ENCODE measurements at regions of chr6 and their contacts with region 1.

Region 1: GRCh38 chr6:30227763-30228487 is 14.7 kb upstream of the TRIM26 start:
- DNase-seq: no peak
- ATAC-seq: no peak
- H3K4me3 ChIP-seq: no peak overlapping the region
- H3K27ac ChIP-seq: no peak overlapping the region
- H3K4me1 ChIP-seq: no peaks in the 10 kb centered on the region
- H3K27me3 ChIP-seq: no peaks in the 10 kb centered on the region
- CTCF ChIP-seq: no peak

Region 2: DNA sequence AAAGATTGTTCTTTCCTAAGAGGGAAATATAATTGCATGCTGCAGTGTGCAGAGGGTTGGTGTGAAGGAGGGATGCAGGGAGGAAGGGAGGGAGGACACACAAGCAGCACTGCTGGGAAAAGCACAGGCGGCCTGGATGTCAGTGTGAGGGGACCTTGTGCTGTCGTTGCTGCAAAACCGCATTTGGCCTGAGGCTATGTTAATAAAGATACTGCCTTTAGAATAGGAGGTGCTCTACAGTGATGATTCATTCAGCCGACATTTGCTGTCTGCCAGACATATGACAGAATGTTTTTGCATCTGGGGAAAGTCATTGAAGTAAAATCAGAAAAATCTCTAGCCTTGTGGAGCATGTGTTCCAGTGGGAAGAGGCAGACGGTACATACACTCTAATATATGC is 35.8 kb after region 1 on chr6:
- intact Hi-C with region 1: no loop called
- DNase-seq: no peak
- ATAC-seq: no peak
- H3K4me3 ChIP-seq: no peak overlapping the region
- H3K27ac ChIP-seq: no peak overlapping the region
- H3K4me1 ChIP-seq: no peaks in the 10 kb centered on the region
- H3K27me3 ChIP-seq: no peaks in the 10 kb centered on the region
- CTCF ChIP-seq: no peak

Region 3: DNA sequence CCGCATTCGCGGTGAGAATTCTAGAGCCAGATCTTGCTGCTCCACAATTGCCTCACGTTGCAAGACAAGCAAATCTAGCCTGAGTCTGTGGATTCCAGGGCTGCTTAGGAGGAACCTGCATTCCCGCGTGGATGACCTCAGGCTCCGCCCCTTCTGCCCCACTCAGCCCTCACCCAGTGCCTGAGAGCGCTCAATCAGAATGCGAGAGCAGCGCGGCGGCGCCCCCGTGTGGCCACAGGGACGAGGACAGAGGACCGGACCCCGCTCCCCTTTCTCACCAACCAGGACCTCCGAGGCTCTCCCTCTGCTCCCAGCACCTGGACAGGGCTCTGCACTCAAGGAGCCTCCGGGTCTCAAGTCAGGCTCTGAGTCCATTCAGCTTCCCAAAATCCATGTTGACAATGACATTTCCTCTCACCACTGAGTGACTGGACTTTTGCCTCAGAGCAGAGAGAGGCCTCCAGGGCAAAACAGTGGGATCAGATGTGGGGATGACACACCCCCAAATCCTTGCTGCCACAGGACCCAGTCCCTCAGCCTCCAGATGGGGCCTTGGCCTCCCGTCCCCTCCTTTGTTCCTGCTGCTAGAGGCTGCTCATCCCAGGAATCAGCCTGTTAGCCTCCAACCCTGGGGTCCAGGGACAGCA is 169.0 kb after region 1 on chr6:
- intact Hi-C with region 1: loop called in 1 of 3 experiments (anchors 10 kb)
- DNase-seq: peak; percentile 55 to 97 (median 79)
- ATAC-seq: peak; percentile 93 to 100 (median 98)
- H3K4me3 ChIP-seq: no peak overlapping the region
- H3K27ac ChIP-seq: no peak overlapping the region
- H3K4me1 ChIP-seq: no peaks in the 10 kb centered on the region
- H3K27me3 ChIP-seq: peaks cover 0 to 3% (median 0%) of the 10 kb centered on the region in 4 donors
- CTCF ChIP-seq: peak; percentile 66 to 84 (median 74)

Measured in pancreas (tissue), 10 donors.